Dorsolateral prefrontal cortex (tissue), 120 donors: ENCODE measurements at regions of chr19 and their contacts with region 1.

Region 1: GRCh38 chr19:2345794-2346663 is 14.0 kb upstream of the TMPRSS9 start:
- DNase-seq: peak in 1 of 10 donors; percentile 45
- H3K4me3 ChIP-seq: no peak overlapping the region
- H3K27ac ChIP-seq: peak overlapping the region in 32 of 59 donors; percentile 3 to 67 (median 40)
- H3K27me3 ChIP-seq: no peaks in the 10 kb centered on the region
- CTCF ChIP-seq: no peak

Region 2: GRCh38 chr19:1774999-1775772 is 570.8 kb before region 1 on chr19:
- intact Hi-C with region 1: no loop called
- DNase-seq: no peak
- H3K4me3 ChIP-seq: no peak overlapping the region
- H3K27ac ChIP-seq: no peak overlapping the region
- H3K27me3 ChIP-seq: peaks cover 7 to 91% (median 71%) of the 10 kb centered on the region in 45 donors
- CTCF ChIP-seq: peak in 20 of 56 donors; percentile 6 to 33 (median 17)

Region 3: DNA sequence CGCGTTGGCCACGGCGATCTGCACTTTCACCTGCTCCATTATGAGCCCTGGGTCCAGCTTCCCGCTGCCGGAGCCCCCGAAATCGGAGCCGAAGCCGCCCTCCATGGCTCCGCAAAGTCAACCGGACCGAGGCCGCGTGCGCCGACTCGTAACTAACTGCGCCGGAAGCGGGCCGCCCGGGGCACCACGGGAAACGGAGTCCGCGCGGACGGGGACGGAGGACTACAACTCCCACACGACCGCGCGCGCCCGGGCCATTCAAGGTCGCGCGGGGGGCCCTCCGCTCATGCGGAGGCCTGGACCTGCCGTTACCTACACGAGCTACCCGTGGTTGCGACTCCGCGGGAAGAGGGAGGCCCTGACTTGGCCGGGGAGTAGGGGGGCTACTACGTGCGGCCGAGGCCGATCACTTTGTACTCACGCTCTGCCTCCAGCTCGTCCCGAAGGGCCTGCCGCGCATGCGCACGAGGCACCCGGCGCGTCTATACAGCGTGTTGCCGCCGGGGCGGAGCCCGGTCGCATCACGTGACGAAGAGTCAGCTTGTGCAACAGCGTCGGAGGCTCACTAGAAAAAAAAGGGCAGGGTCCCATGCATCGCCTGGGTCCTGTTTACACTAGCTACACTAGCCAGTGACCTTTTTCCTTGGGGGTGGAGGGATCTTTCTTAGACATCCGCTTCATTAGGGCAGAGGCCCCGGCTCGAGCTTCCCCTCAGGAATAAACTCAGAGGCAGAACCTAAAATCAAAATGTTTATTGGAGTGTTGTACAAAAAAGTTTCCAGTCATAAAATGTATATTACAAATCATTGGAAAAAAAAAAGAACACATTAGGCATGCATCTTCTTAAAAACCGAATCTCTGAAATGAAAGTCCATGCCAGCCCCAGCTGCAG is 81.6 kb after region 1 on chr19 and contains the start of gene TIMM13:
- intact Hi-C with region 1: no loop called
- DNase-seq: peak; percentile 94 to 99 (median 96)
- H3K4me3 ChIP-seq: peak within 1 kb of the TSS; percentile 62 to 100 (median 96)
- H3K27ac ChIP-seq: peak within 1 kb of the TSS; percentile 79 to 100 (median 98)
- H3K27me3 ChIP-seq: no peaks in the 10 kb centered on the region
- CTCF ChIP-seq: peak in 10 of 56 donors; percentile 2 to 39 (median 16)
- total RNA-seq, gene TIMM13: 36.0 to 71.8 (median 52.0) TPM

Region 4: DNA sequence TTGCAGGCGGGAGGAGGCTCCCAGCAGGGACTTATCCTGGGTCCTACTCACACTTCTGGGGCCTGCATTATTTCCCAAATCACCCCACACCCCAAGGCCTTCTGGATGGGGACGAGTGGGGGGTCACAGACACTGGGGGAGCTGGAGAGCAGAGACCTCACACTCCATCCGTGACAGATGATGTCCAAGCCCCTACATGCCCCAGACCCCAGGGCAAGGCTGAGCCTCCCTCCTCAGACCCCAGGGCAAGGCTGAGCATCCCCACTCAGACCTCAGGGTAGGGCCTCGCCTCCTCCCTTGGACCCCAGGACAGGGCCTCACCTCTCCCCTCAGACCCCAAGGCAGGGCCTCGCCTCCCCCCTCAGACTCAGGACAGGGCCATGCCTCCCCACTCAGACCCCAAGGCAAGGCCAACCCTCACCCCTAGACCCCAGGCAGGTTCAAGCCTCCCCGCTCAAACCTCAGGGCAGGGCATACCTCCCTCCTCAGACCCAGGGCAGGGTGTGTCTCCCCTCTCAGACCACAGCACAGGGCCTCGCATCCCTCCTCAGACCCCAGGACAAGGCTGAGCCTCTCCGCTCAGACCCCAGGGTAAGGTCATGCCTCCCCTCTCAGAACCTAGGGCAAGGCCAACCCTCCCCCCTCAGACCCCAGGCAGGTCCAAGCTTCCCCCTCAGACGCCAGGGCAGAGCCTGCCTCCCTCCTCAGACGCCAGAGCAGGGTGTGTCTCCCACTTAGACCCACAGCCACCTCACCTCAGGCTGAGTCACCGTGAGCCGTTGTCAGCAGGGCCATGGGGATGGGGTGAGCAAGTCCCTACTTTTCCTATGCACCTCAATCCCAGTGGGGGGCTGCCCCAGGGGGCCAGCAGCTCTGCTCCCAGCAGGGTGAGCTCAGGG is 830.8 kb after region 1 on chr19:
- intact Hi-C with region 1: loop called in 1 of 2 experiments (anchors 10 kb)
- DNase-seq: no peak
- H3K4me3 ChIP-seq: no peak overlapping the region
- H3K27ac ChIP-seq: no peak overlapping the region
- H3K27me3 ChIP-seq: no peaks in the 10 kb centered on the region
- CTCF ChIP-seq: no peak